ENCODE measurements at regions of chr12 and their contacts with region 1.

Region 1: DNA sequence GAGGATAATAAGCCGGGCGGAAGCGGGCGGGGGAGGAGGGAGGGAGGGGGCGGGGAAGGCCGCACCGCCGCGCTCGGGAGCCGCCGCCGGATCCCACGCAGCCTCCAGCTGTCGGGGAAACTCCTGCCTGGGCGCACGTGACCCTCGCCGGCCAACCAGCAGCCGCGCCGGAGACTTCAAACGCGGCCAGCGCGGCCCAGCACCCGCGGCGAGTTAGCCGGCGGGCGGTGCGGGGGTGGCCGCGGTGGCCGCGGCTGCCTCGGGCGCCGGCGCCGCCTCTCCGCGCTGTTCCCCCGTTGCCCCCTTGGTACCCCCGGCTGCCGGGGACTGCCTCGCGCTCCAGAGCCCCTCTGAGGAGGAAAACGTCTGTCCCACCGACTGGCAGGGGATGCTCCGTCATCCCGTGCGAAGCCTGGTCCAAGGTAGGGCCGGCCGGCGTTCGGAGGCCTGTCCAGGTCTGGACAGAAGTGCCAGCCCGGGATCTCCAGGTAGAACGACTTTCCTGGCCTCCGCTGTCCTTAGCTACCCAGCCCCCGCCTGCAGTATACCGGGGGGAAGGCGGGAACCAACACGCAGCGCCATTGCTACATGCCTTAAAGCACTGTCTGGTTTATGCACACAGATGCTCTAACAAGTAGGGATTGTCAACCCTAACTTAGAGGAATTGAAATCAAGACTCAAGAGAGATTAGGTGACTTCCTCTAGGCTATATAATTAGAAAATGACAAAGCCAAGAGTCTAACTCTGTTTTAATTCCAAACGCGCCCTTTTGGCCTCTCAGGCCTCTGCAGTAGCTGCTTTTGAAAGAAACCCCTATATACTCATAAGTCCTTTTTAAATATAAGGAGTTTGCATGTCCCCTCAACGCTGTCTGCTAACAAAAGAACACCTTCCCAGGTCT is at the start of gene YAF2:
- DNase-seq: peak; percentile 90
- H3K4me3 Mint-ChIP-seq: peak within 1 kb of the TSS; percentile 89
- H3K27ac Mint-ChIP-seq: peak within 1 kb of the TSS; percentile 83
- H3K4me1 Mint-ChIP-seq: peaks cover 30% of the 10 kb centered on the region
- H3K27me3 Mint-ChIP-seq: no peaks in the 10 kb centered on the region
- total RNA-seq, gene YAF2: 28.6 to 34.8 TPM

Region 2: GRCh38 chr12:41576925-41577324 is 661.6 kb before region 1 on chr12:
- CTCF ChIA-PET with region 1: no interaction called
- intact Hi-C with region 1: no loop called
- DNase-seq: no peak
- H3K4me3 Mint-ChIP-seq: no peak overlapping the region
- H3K27ac Mint-ChIP-seq: no peak overlapping the region
- H3K4me1 Mint-ChIP-seq: no peaks in the 10 kb centered on the region
- H3K27me3 Mint-ChIP-seq: no peaks in the 10 kb centered on the region

Region 3: GRCh38 chr12:42097971-42098370 is 140.5 kb before region 1 on chr12:
- CTCF ChIA-PET with region 1: no interaction called
- intact Hi-C with region 1: loop called (anchors 2 kb)
- DNase-seq: peak; percentile 23
- H3K4me3 Mint-ChIP-seq: peak overlapping the region; percentile 75
- H3K27ac Mint-ChIP-seq: peak overlapping the region; percentile 77
- H3K4me1 Mint-ChIP-seq: peaks cover 31% of the 10 kb centered on the region
- H3K27me3 Mint-ChIP-seq: no peaks in the 10 kb centered on the region

Region 4: GRCh38 chr12:42144408-42145196 is 93.9 kb before region 1 on chr12 and contains the start of gene GXYLT1:
- CTCF ChIA-PET with region 1: no interaction called
- intact Hi-C with region 1: loop called (anchors 1 kb)
- DNase-seq: peak; percentile 78
- H3K4me3 Mint-ChIP-seq: peak within 1 kb of the TSS; percentile 90
- H3K27ac Mint-ChIP-seq: peak within 1 kb of the TSS; percentile 75
- H3K4me1 Mint-ChIP-seq: peaks cover 28% of the 10 kb centered on the region
- H3K27me3 Mint-ChIP-seq: no peaks in the 10 kb centered on the region
- total RNA-seq, gene GXYLT1: 4.6 to 5.1 TPM

Region 5: GRCh38 chr12:42221726-42222125 is 16.8 kb before region 1 on chr12:
- CTCF ChIA-PET with region 1: no interaction called
- intact Hi-C with region 1: loop called (anchors 2 kb)
- DNase-seq: no peak
- H3K4me3 Mint-ChIP-seq: no peak overlapping the region
- H3K27ac Mint-ChIP-seq: no peak overlapping the region
- H3K4me1 Mint-ChIP-seq: peaks cover 44% of the 10 kb centered on the region
- H3K27me3 Mint-ChIP-seq: no peaks in the 10 kb centered on the region

Region 6: GRCh38 chr12:42299392-42300308 is 61.2 kb after region 1 on chr12:
- CTCF ChIA-PET with region 1: interaction called, 3 read pairs
- intact Hi-C with region 1: loop called (anchors 1 kb)
- DNase-seq: peak; percentile 91
- H3K4me3 Mint-ChIP-seq: no peak overlapping the region
- H3K27ac Mint-ChIP-seq: peak overlapping the region; percentile 36
- H3K4me1 Mint-ChIP-seq: peaks cover 14% of the 10 kb centered on the region
- H3K27me3 Mint-ChIP-seq: no peaks in the 10 kb centered on the region

Region 7: GRCh38 chr12:42360747-42361403 is 122.4 kb after region 1 on chr12:
- CTCF ChIA-PET with region 1: interaction called, 4 read pairs
- intact Hi-C with region 1: loop called (anchors 2 kb)
- DNase-seq: no peak
- H3K4me3 Mint-ChIP-seq: no peak overlapping the region
- H3K27ac Mint-ChIP-seq: peak overlapping the region; percentile 65
- H3K4me1 Mint-ChIP-seq: peaks cover 51% of the 10 kb centered on the region
- H3K27me3 Mint-ChIP-seq: no peaks in the 10 kb centered on the region

Region 8: DNA sequence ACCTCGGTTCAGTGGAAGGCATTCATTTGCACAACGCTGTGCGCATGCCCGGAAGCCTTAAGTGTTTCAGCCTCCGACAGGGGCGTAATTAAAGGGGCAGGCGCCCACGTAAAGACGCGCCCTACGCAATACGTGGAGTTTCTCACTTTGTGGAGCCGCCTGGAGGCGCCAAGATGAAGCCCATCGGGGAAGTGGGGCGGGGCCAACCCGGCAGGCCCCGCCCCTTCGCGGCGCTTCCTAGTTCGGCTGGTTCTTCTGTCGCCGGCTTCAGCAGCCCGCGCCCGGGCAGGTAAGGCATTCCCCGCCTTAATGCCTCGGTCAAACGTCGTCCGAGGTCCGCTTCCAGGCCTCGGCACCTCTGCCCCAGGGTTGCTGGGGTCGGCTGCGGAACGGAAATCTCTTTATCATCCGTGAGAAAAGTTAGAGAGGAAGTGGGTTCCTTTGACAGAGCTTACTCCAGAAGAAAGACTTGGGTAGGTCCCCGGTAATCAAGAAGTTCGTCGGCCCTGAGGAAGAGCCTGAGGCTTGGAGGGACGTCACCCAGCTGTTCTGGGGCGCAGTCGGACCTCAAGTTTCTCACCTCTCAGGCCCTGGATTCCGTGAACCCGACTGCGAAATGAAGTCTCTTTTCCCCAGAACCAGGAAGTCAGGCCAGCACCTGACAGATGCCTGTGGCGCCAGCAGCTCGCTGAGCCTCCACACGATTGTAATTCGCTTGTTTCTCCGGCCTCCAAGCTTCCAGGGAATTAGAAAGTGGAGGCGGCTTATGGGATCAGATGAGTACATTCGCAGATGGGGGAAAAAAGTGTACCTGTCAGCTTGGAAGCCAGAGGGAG is 1520.5 kb after region 1 on chr12 and contains the starts of genes IRAK4 and PUS7L:
- CTCF ChIA-PET with region 1: no interaction called
- intact Hi-C with region 1: loop called (anchors 2 kb)
- DNase-seq: peak; percentile 96
- H3K4me3 Mint-ChIP-seq: peak within 1 kb of the TSS; percentile 97
- H3K27ac Mint-ChIP-seq: peak within 1 kb of the TSS; percentile 96
- H3K4me1 Mint-ChIP-seq: peaks cover 58% of the 10 kb centered on the region
- H3K27me3 Mint-ChIP-seq: no peaks in the 10 kb centered on the region
- total RNA-seq, gene IRAK4: 24.2 to 24.5 TPM
- total RNA-seq, gene PUS7L: 8.1 to 10.5 TPM

Measured in activated naive CD4-positive, alpha-beta T cell treated with anti-CD3 and anti-CD28 coated beads for 36 hours (primary cell).